ENCODE measurements at regions of chr1 and their contacts with region 1.

Region 1: GRCh38 chr1:115112496-115113375 is 23.4 kb upstream of the TSPAN2 start:
- DNase-seq: peak; percentile 56
- H3K4me3 Mint-ChIP-seq: no peak overlapping the region
- H3K27ac Mint-ChIP-seq: no peak overlapping the region
- H3K4me1 Mint-ChIP-seq: no peaks in the 10 kb centered on the region
- H3K27me3 Mint-ChIP-seq: no peaks in the 10 kb centered on the region

Region 2: DNA sequence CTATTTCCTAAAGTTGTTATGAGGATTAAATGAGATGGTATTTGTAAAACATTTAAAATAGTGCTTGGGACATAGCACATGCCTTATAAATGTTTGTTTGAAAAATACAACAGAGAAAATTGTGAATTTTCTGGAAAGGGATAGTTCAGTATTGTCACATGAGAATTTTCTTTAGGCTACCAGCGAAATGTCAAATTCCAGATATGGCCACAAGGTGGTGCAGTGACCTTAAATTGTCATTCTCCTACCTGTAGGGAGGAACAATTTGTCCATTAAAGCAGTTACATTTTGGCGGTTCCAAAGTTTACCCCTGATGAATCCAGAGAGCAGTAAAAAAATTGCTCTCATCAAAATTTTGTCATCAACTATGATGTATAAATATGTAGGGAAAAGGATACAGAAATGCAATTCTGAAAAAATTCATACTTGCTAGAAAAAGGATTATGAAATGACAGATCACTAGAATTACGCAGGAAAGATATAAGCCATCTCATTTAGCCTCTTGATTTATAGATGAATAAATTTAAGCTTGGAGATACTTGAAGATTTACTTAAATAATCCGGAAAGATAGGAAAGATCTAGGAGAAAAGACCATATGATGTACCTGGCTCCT is 133.4 kb before region 1 on chr1:
- CTCF ChIA-PET with region 1: interaction called, 38 read pairs
- DNase-seq: peak; percentile 79
- H3K4me3 Mint-ChIP-seq: no peak overlapping the region
- H3K27ac Mint-ChIP-seq: no peak overlapping the region
- H3K4me1 Mint-ChIP-seq: no peaks in the 10 kb centered on the region
- H3K27me3 Mint-ChIP-seq: peaks cover 4% of the 10 kb centered on the region

Measured in activated naive CD4-positive, alpha-beta T cell treated with anti-CD3 and anti-CD28 coated beads, Interleukin-2, amount 10 ng/mL, durations not matched to agents 7 days and 5 days (primary cell).